Activated naive CD4-positive, alpha-beta T cell treated with anti-CD3 and anti-CD28 coated beads for 36 hours (primary cell): ENCODE measurements at regions of chr11 and their contacts with region 1.

Region 1: DNA sequence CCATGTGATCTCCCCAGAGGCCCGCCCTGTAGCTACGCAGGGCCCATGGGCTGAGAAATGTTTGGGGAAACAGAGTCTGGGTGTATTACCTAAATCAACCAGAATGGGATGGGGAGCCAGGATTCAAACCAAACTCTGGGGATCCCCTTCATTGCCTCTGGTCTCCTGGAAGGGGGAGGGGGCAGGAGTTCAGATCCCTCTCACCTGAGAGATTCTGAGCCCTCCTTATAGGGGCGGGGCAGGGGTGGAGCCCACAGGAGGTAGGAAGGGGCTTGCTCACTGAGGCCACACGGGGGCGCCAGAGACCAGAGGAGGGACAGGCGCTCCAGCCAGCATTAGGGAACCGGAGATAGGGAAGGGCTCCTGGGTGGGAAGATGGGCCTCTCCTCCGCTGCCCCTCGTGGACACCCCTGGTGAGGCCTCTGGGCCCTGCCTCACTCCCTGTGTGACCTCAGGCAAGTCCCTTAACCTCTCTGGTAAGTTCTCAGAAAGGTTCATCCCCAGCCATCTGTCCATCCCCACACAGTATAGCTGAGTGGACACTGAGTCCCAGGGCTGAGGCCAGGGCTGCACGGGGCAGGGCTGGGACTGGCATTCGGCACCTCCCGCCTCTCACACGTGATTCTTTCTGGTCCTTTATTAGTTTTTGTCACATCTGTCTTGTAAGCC is 2.7 kb upstream of the CDC42BPG start:
- DNase-seq: peak; percentile 96
- H3K4me3 Mint-ChIP-seq: no peak overlapping the region
- H3K27ac Mint-ChIP-seq: no peak overlapping the region
- H3K4me1 Mint-ChIP-seq: peaks cover 57% of the 10 kb centered on the region
- H3K27me3 Mint-ChIP-seq: no peaks in the 10 kb centered on the region

Region 2: GRCh38 chr11:63567044-63567840 is 1279.9 kb before region 1 on chr11:
- CTCF ChIA-PET with region 1: no interaction called
- intact Hi-C with region 1: no loop called
- DNase-seq: peak; percentile 73
- H3K4me3 Mint-ChIP-seq: peak overlapping the region; percentile 64
- H3K27ac Mint-ChIP-seq: peak overlapping the region; percentile 79
- H3K4me1 Mint-ChIP-seq: peaks cover 41% of the 10 kb centered on the region
- H3K27me3 Mint-ChIP-seq: no peaks in the 10 kb centered on the region

Region 3: GRCh38 chr11:64723117-64723906 is 123.8 kb before region 1 on chr11 and contains the start of gene NRXN2:
- CTCF ChIA-PET with region 1: no interaction called
- intact Hi-C with region 1: no loop called
- DNase-seq: peak; percentile 91
- H3K4me3 Mint-ChIP-seq: peak within 1 kb of the TSS; percentile 67
- H3K27ac Mint-ChIP-seq: no peak within 1 kb of the TSS
- H3K4me1 Mint-ChIP-seq: peaks cover 7% of the 10 kb centered on the region
- H3K27me3 Mint-ChIP-seq: peaks cover 22% of the 10 kb centered on the region
- total RNA-seq, gene NRXN2: 0.24 to 0.35 TPM

Region 4: GRCh38 chr11:64864473-64865285 is 17.5 kb after region 1 on chr11:
- CTCF ChIA-PET with region 1: interaction called, 288 read pairs
- intact Hi-C with region 1: loop called (anchors 1 kb)
- DNase-seq: peak; percentile 84
- H3K4me3 Mint-ChIP-seq: peak overlapping the region; percentile 56
- H3K27ac Mint-ChIP-seq: peak overlapping the region; percentile 97
- H3K4me1 Mint-ChIP-seq: peaks cover 95% of the 10 kb centered on the region
- H3K27me3 Mint-ChIP-seq: no peaks in the 10 kb centered on the region

Region 5: GRCh38 chr11:64894070-64894796 is 47.1 kb after region 1 on chr11:
- CTCF ChIA-PET with region 1: interaction called, 992 read pairs
- intact Hi-C with region 1: loop called (anchors 1 kb)
- DNase-seq: peak; percentile 95
- H3K4me3 Mint-ChIP-seq: no peak overlapping the region
- H3K27ac Mint-ChIP-seq: no peak overlapping the region
- H3K4me1 Mint-ChIP-seq: peaks cover 2% of the 10 kb centered on the region
- H3K27me3 Mint-ChIP-seq: no peaks in the 10 kb centered on the region

Region 6: DNA sequence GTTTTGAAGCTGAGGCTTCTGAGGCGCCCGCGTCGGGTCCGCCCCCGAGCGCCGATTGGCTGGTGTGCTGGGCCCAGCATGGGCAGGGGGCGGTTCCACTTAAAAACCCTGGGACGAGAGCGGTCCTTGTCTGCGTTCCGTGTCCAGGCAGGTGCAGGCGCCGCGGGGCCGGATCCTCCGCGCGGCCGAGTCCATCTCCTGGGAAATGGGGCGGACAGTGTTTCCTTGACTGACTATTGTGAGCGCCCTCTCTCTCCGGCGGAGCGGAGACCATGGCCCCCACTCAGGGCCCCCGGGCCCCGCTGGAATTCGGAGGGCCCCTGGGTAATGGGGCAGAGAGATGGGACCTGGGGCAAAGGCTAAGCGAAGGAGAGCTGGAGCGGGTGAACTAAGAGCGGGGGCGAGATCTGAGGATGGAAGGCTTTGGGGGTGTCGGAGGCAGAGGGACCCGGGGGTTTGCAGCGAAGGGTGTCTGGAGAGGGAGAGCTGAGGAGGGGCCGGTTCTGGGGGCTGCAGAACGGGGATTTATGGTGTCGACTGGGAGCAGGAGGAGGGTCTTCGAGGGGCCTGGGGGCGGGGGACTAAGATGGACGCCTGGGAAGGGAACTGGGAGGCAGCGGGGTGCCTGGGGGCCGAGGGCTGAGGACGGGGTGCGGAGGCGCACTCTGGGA is 264.7 kb after region 1 on chr11 and contains the start of gene TM7SF2:
- CTCF ChIA-PET with region 1: interaction called, 14 read pairs
- intact Hi-C with region 1: loop called (anchors 1 kb)
- DNase-seq: peak; percentile 96
- H3K4me3 Mint-ChIP-seq: peak within 1 kb of the TSS; percentile 80
- H3K27ac Mint-ChIP-seq: peak within 1 kb of the TSS; percentile 72
- H3K4me1 Mint-ChIP-seq: peaks cover 51% of the 10 kb centered on the region
- H3K27me3 Mint-ChIP-seq: no peaks in the 10 kb centered on the region
- total RNA-seq, gene TM7SF2: 10.9 to 11.9 TPM